Lower lobe of right lung (tissue), 2 donors: ENCODE measurements at regions of chr11 and their contacts with region 1.

Region 1: GRCh38 chr11:100855466-100856067 is 168.5 kb downstream of the ARHGAP42 start:
- DNase-seq: no peak
- ATAC-seq: no peak
- H3K4me3 ChIP-seq: no peak overlapping the region
- H3K27ac ChIP-seq: no peak overlapping the region
- H3K4me1 ChIP-seq: no peaks in the 10 kb centered on the region
- H3K27me3 ChIP-seq: no peaks in the 10 kb centered on the region
- CTCF ChIP-seq: peak; percentile 58

Region 2: GRCh38 chr11:100575870-100576705 is 279.5 kb before region 1 on chr11:
- intact Hi-C with region 1: loop called (anchors 10 kb)
- DNase-seq: no peak
- ATAC-seq: peak; percentile 72 to 86
- H3K4me3 ChIP-seq: no peak overlapping the region
- H3K27ac ChIP-seq: no peak overlapping the region
- H3K4me1 ChIP-seq: no peaks in the 10 kb centered on the region
- H3K27me3 ChIP-seq: no peaks in the 10 kb centered on the region
- CTCF ChIP-seq: peak; percentile 55

Region 3: DNA sequence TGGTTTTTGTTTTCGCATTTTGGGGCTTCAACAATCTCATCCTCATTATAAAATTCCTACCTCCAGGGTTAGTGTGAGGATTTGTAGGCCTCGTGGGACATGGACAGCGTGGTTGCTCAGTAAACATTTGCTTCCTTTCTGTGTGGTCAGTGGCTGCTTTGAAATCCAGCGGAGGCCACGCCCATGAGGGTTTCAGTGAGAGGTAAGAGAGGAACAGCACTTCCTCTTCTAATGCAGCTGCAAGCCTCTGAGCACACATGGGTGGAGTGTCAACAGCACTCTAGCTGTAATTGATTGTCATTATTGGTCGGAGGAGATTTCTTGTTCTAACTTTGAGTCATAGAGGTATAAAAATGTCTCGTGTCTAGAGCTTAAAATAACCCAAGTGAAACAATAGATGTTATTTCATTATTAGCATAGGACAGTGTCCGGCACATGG is 174.5 kb before region 1 on chr11:
- intact Hi-C with region 1: loop called (anchors 5 kb)
- DNase-seq: peak; percentile 79
- ATAC-seq: peak; percentile 81 to 92
- H3K4me3 ChIP-seq: no peak overlapping the region
- H3K27ac ChIP-seq: no peak overlapping the region
- H3K4me1 ChIP-seq: peaks cover 4% of the 10 kb centered on the region
- H3K27me3 ChIP-seq: no peaks in the 10 kb centered on the region
- CTCF ChIP-seq: no peak

Region 4: GRCh38 chr11:100739666-100740065 is 115.9 kb before region 1 on chr11:
- intact Hi-C with region 1: no loop called
- DNase-seq: no peak
- ATAC-seq: peak; percentile 90 to 94
- H3K4me3 ChIP-seq: no peak overlapping the region
- H3K27ac ChIP-seq: peak overlapping the region; percentile 58
- H3K4me1 ChIP-seq: peaks cover 23% of the 10 kb centered on the region
- H3K27me3 ChIP-seq: no peaks in the 10 kb centered on the region
- CTCF ChIP-seq: no peak